Calu3 (cell line): ENCODE measurements at regions of chr12 and their contacts with region 1.

Region 1: GRCh38 chr12:67747869-67748742 is 99.6 kb downstream of the DYRK2 start:
- DNase-seq: peak; percentile 67
- H3K4me3 Mint-ChIP-seq: peak overlapping the region; percentile 53
- H3K27ac Mint-ChIP-seq: peak overlapping the region; percentile 90
- H3K4me1 Mint-ChIP-seq: peaks cover 72% of the 10 kb centered on the region
- H3K27me3 Mint-ChIP-seq: no peaks in the 10 kb centered on the region
- CTCF ChIP-seq: no peak

Region 2: GRCh38 chr12:67515679-67516340 is 232.3 kb before region 1 on chr12:
- CTCF ChIA-PET with region 1: no interaction called
- intact Hi-C with region 1: loop called (anchors 5 kb)
- DNase-seq: peak; percentile 64
- H3K4me3 Mint-ChIP-seq: no peak overlapping the region
- H3K27ac Mint-ChIP-seq: peak overlapping the region; percentile 64
- H3K4me1 Mint-ChIP-seq: peaks cover 53% of the 10 kb centered on the region
- H3K27me3 Mint-ChIP-seq: no peaks in the 10 kb centered on the region
- CTCF ChIP-seq: no peak

Region 3: GRCh38 chr12:67578976-67579661 is 169.0 kb before region 1 on chr12:
- CTCF ChIA-PET with region 1: no interaction called
- intact Hi-C with region 1: no loop called
- DNase-seq: no peak
- H3K4me3 Mint-ChIP-seq: no peak overlapping the region
- H3K27ac Mint-ChIP-seq: no peak overlapping the region
- H3K4me1 Mint-ChIP-seq: peaks cover 13% of the 10 kb centered on the region
- H3K27me3 Mint-ChIP-seq: no peaks in the 10 kb centered on the region
- CTCF ChIP-seq: no peak

Region 4: DNA sequence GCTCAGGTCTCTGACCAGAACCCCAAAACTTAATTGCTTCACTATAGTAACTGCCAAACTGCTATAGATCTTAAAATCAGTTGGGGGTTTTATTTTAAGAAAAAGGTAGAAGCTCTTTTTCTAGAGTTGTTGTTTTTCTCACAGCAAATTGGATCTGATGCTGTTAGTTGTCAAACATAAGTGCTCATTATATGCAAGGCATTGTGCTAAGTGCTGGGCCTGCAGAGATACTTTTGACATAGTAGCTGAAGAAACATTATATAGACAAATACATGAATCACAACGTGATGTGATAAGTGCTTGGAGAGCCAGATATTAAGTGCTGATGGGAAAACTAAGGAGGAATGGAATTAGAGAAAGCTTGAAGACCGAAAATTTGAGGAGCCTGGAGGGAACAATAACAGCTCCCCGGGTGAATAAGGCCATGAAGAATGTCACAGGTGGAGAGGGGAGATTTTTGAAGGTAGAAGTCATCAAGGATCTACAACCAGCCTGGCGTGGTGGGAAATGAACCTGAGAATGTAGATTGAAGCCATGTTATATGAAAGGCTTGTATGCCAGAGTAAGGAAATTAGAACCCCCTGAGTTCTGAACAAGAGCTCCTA is 27.0 kb after region 1 on chr12:
- CTCF ChIA-PET with region 1: no interaction called
- intact Hi-C with region 1: no loop called
- DNase-seq: no peak
- H3K4me3 Mint-ChIP-seq: no peak overlapping the region
- H3K27ac Mint-ChIP-seq: no peak overlapping the region
- H3K4me1 Mint-ChIP-seq: peaks cover 9% of the 10 kb centered on the region
- H3K27me3 Mint-ChIP-seq: no peaks in the 10 kb centered on the region
- CTCF ChIP-seq: no peak

Region 5: GRCh38 chr12:67885375-67886169 is 137.5 kb after region 1 on chr12:
- CTCF ChIA-PET with region 1: no interaction called
- intact Hi-C with region 1: loop called (anchors 10 kb)
- DNase-seq: peak; percentile 10
- H3K4me3 Mint-ChIP-seq: peak overlapping the region; percentile 20
- H3K27ac Mint-ChIP-seq: peak overlapping the region; percentile 83
- H3K4me1 Mint-ChIP-seq: peaks cover 41% of the 10 kb centered on the region
- H3K27me3 Mint-ChIP-seq: no peaks in the 10 kb centered on the region
- CTCF ChIP-seq: no peak

Region 6: DNA sequence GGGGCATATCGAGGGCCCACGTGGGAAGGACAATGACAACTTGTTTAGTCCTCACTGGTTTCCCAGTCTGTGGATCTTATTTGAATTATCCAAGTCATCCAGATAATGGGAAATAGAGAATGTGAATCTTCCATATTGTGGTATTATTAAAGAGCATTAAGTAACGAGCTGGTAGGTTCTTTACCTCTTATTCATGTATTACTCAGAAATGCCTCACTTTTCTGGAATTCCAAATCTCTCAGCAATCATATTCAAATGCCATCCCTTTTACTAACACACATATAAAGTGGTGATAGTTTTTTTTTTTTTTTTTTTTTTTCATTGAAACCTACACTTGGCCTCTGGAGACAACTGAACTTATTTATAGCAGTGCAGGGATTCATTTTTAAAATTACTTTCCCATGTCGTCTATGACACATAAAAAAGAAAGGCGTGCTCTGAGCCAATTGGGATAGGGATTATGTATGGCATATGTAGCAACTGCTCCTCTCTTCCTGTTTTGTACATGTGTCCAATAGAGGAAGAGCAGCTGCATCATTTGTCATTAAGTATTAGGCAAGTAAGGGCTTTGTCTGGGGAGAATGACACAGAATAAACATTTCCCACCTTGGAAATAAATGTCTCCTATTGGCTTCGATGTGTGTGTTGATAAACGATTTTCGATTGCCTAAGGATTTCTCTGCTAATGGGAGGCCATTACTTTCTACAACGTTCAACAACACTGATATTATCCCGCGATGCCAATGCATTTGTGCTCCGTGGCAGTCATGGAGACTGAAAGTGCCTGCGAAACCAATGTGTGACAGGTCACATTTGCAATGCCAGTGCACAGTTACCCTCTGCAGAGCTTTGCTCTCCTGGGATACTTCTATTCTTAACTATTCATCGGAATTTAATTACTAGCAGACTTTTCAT is 162.5 kb after region 1 on chr12:
- CTCF ChIA-PET with region 1: no interaction called
- intact Hi-C with region 1: no loop called
- DNase-seq: no peak
- H3K4me3 Mint-ChIP-seq: no peak overlapping the region
- H3K27ac Mint-ChIP-seq: no peak overlapping the region
- H3K4me1 Mint-ChIP-seq: peaks cover 12% of the 10 kb centered on the region
- H3K27me3 Mint-ChIP-seq: no peaks in the 10 kb centered on the region
- CTCF ChIP-seq: no peak

Region 7: GRCh38 chr12:67943226-67943892 is 195.3 kb after region 1 on chr12:
- CTCF ChIA-PET with region 1: interaction called, 5 read pairs
- intact Hi-C with region 1: loop called (anchors 1 kb)
- DNase-seq: peak; percentile 72
- H3K4me3 Mint-ChIP-seq: no peak overlapping the region
- H3K27ac Mint-ChIP-seq: peak overlapping the region; percentile 10
- H3K4me1 Mint-ChIP-seq: peaks cover 39% of the 10 kb centered on the region
- H3K27me3 Mint-ChIP-seq: no peaks in the 10 kb centered on the region
- CTCF ChIP-seq: peak; percentile 35